ENCODE measurements at regions of chr14 and their contacts with region 1.

Region 1: DNA sequence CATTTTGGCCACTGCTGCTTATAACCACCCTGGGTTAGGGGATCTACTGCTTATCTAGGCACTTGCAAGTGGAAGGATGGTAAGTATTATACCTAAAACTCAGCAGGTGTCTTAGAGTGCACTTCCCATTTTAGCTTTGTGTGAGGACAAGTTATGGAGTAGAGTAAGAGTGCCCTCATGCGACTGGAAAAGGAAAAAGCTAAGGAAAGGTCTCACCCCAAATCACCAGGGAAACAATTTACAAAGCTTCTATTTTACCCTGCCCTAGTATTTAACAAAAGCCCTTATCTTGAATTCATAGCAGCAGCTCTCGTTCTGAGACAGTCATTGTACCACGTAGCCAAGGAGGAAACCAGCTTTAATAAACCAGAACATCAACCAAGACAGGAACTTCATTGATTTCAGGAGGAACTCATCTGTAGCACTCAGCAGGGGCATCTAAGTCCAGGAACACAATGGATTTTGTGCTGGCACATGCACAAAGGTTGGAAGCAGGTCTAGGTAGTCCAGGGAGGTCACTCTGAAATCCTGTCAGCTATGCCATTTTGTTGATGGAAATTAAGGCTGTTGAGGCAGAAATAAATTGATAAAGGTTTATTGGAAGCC is 2.9 kb downstream of the RDH12 start:
- DNase-seq: no peak
- ATAC-seq: peak; percentile 67 to 91 (median 79)
- H3K4me3 ChIP-seq: no peak overlapping the region
- H3K27ac ChIP-seq: no peak overlapping the region
- H3K4me1 ChIP-seq: no peaks in the 10 kb centered on the region
- H3K27me3 ChIP-seq: no peaks in the 10 kb centered on the region
- CTCF ChIP-seq: peak; percentile 70

Region 2: DNA sequence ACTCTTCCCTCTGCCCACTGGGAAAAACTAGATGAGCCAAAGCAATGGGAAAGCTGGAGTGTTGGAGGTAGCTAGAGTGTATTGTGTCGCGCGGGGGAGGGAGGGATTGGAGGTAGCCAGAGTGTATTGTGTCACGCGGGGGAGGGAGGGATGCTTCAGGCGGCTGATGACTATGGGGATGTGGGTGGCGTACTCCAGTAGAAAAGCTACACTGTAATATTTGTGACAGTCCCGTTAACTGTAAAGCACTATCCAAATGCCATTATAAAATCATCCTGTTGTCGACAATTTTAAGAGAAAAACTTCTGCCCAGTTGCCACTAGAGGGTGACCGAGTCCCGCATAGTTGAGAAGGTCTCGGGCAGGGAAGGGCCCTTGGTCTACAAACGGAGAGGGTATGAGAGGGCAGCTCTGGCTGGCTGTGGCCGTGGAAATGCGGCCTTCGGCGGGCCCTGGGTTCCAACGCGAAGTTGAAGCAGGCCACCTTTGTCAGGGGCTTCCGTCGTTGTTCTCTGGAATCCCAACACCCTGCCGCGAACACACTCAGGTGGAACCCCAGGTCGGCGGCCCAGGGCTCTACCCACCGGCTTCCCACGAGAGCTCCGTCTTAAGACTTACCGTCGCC is 277.5 kb before region 1 on chr14:
- intact Hi-C with region 1: loop called (anchors 10 kb)
- DNase-seq: peak; percentile 65 to 85
- ATAC-seq: peak; percentile 88 to 94 (median 88)
- H3K4me3 ChIP-seq: no peak overlapping the region
- H3K27ac ChIP-seq: no peak overlapping the region
- H3K4me1 ChIP-seq: peaks cover 19% of the 10 kb centered on the region
- H3K27me3 ChIP-seq: no peaks in the 10 kb centered on the region
- CTCF ChIP-seq: peak; percentile 86

Region 3: GRCh38 chr14:67526676-67527459 is 177.7 kb before region 1 on chr14:
- intact Hi-C with region 1: loop called in 1 of 2 experiments (anchors 5 kb)
- DNase-seq: peak in 1 of 2 donors; percentile 55
- ATAC-seq: peak; percentile 82 to 95 (median 88)
- H3K4me3 ChIP-seq: no peak overlapping the region
- H3K27ac ChIP-seq: no peak overlapping the region
- H3K4me1 ChIP-seq: no peaks in the 10 kb centered on the region
- H3K27me3 ChIP-seq: peaks cover 0 to 6% (median 0%) of the 10 kb centered on the region in 3 donors
- CTCF ChIP-seq: peak; percentile 71

Region 4: DNA sequence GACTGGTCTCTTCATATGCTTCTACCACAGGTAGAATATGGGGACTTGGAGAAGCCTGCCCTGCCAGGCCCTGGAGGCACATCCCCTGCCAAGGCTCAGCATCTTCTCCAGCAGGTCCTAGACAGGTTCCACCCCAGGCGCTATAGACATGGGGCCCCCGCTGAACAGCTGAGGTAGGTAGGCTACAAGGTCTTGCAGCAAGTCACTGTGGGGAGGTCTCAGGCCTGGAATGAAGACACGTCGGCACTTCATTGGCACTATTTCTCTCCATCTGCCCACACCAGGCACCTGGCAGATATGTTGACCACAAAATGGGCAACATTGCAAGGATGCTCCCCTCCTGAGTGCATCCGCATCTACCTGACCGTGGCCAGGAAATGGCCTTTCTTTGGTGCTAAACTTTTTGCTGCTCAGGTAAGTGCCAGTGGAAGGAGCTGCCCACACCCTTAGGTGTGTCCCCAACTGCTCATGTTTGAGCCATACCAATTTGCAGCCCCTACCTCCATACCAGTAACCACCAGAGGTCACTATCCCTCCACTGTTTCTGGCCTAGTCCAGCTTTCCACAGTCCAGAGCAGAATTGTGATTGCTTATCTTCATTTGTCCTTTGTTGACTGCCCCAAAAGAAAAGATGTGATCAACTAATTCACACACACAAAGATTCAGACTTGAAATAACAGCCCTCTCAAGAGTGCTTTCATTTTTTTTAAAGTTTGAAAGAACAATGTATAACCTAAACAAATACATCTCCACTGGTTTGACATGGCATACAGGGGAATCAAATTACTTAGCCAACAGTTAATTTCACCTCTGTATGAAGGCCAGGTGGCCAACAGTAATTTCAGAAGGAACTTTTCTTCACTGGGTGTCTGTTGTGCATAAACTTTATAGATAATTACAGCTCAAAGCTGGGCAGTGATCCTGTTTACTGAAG is 120.6 kb before region 1 on chr14:
- intact Hi-C with region 1: loop called (anchors 2 to 5 kb)
- DNase-seq: no peak
- ATAC-seq: peak; percentile 81 to 91 (median 83)
- H3K4me3 ChIP-seq: no peak overlapping the region
- H3K27ac ChIP-seq: no peak overlapping the region
- H3K4me1 ChIP-seq: no peaks in the 10 kb centered on the region
- H3K27me3 ChIP-seq: no peaks in the 10 kb centered on the region
- CTCF ChIP-seq: peak; percentile 69

Region 5: DNA sequence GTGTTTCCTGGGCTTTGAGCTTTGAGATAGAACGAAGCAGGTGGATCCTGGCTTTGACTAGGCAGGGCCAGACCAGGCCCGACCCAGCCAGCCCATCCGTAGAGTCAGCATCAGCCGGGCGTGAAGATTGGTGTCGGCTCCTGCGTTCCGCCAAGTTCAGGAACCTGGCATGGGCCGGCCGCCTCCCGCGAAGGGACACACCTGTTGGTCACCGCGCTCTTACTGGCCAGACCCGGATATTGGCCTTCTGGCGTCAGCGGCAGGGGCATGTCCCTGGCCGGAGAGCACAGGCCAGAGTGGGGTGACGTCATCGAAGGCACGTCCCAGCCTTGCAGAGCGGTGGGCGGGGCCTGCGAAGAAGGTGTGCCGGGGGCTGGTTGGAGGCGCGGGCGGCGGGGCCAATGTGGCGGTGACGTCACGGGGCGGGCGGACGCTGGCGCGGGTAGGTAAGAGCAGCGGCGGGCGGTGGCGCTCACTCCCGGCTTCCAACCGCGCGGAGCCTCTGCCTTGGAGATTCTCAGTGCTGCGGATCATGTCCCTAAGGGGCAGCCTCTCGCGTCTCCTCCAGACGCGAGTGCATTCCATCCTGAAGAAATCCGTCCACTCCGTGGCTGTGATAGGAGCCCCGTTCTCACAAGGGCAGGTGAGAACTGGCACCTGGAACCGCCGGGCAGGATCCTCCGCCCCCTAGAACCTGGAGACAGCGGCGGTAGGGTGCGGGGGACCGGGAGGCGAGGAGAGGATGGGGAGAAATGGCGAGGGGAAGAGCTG is 85.0 kb before region 1 on chr14 and contains the start of gene ARG2:
- intact Hi-C with region 1: loop called (anchors 5 kb)
- DNase-seq: peak; percentile 95 to 97
- ATAC-seq: peak; percentile 95 to 97 (median 96)
- H3K4me3 ChIP-seq: peak within 1 kb of the TSS; percentile 76
- H3K27ac ChIP-seq: peak within 1 kb of the TSS; percentile 74
- H3K4me1 ChIP-seq: peaks cover 19% of the 10 kb centered on the region
- H3K27me3 ChIP-seq: no peaks in the 10 kb centered on the region
- CTCF ChIP-seq: no peak
- total RNA-seq, gene ARG2: 1.3 to 19.3 (median 8.0) TPM